ENCODE measurements at regions of chr3 and their contacts with region 1.

Region 1: GRCh38 chr3:17412950-17413530 is 329.4 kb downstream of the TBC1D5 start:
- DNase-seq: peak; percentile 46 to 75 (median 54)
- ATAC-seq: peak; percentile 97
- H3K4me3 ChIP-seq: no peak overlapping the region
- H3K27ac ChIP-seq: no peak overlapping the region
- H3K4me1 ChIP-seq: no peaks in the 10 kb centered on the region
- H3K27me3 ChIP-seq: no peaks in the 10 kb centered on the region
- CTCF ChIP-seq: peak; percentile 69 to 91 (median 80)
- EP300 ChIP-seq: no peak
- POLR2A ChIP-seq: no peak
- RAD21 ChIP-seq: peak; percentile 94

Region 2: DNA sequence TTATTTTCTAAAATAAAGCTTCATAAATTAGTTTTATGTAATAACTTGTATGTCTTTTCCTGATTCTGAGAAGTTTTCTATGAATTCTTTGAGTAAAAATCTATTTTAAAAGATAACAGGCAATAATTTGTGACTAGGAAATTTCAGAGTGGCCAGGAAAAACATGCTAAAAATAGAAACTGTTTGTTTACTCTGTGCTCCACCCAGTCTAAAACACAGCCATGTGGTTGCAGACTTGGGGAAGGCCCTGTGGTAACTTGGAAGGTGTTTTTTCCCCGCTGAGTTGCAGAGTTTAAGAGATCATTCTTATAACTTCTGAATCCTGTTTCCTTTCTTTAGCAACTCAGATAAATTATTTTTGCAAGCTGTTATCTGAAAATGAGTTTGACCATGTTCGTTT is 506.4 kb before region 1 on chr3:
- CTCF ChIA-PET with region 1: no interaction called
- POLR2A ChIA-PET with region 1: no interaction called
- in situ Hi-C with region 1: loop called (anchors 25 kb)
- intact Hi-C with region 1: no loop called
- DNase-seq: peak in 2 of 4 experiments; percentile 28 to 30
- ATAC-seq: peak; percentile 76
- H3K4me3 ChIP-seq: no peak overlapping the region
- H3K27ac ChIP-seq: no peak overlapping the region
- H3K4me1 ChIP-seq: peaks cover 0 to 8% of the 10 kb centered on the region in 2 experiments; a peak in 4 of 5 replicates
- H3K27me3 ChIP-seq: no peaks in the 10 kb centered on the region; a peak in 2 of 5 replicates
- CTCF ChIP-seq: no peak
- EP300 ChIP-seq: no peak
- POLR2A ChIP-seq: no peak
- RAD21 ChIP-seq: no peak

Region 3: GRCh38 chr3:17307482-17307881 is 105.6 kb before region 1 on chr3:
- CTCF ChIA-PET with region 1: interaction called, 17 read pairs
- POLR2A ChIA-PET with region 1: no interaction called
- in situ Hi-C with region 1: no loop called
- intact Hi-C with region 1: loop called (anchors 1 kb)
- DNase-seq: no peak
- ATAC-seq: no peak
- H3K4me3 ChIP-seq: no peak overlapping the region
- H3K27ac ChIP-seq: no peak overlapping the region
- H3K4me1 ChIP-seq: no peaks in the 10 kb centered on the region
- H3K27me3 ChIP-seq: no peaks in the 10 kb centered on the region
- CTCF ChIP-seq: peak in 2 of 3 experiments; percentile 4 to 49; a peak in 3 of 6 replicates
- EP300 ChIP-seq: no peak
- POLR2A ChIP-seq: no peak
- RAD21 ChIP-seq: peak; percentile 59 to 60

Region 4: DNA sequence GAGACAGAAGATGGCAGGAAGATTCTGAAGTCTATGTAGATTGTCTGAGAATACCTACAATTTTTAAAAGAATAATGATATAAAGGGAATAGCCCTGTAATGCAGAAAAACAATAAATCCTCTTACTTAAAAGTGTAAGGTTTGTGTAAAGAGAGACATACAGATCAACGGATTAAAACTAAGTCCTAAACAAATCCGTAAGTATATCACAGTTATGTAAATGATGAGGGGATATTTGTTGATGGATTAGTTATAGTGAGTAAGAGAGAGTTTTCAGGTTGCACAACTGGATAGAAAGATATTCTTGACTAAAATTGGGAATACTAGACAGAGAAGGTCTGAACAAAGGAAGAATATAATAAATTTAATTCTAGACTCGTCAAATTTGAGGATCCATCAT is 149.8 kb after region 1 on chr3:
- CTCF ChIA-PET with region 1: no interaction called
- POLR2A ChIA-PET with region 1: no interaction called
- in situ Hi-C with region 1: no loop called
- intact Hi-C with region 1: no loop called
- DNase-seq: no peak
- ATAC-seq: no peak
- H3K4me3 ChIP-seq: no peak overlapping the region
- H3K27ac ChIP-seq: no peak overlapping the region
- H3K4me1 ChIP-seq: no peaks in the 10 kb centered on the region
- H3K27me3 ChIP-seq: no peaks in the 10 kb centered on the region
- CTCF ChIP-seq: no peak
- EP300 ChIP-seq: no peak
- POLR2A ChIP-seq: no peak
- RAD21 ChIP-seq: no peak

Measured in K562 (cell line).